ENCODE measurements at regions of chr5 and their contacts with region 1.

Region 1: GRCh38 chr5:14706615-14707021 is 42.1 kb downstream of the OTULIN start:
- DNase-seq: peak; percentile 32 to 84 (median 57)
- ATAC-seq: peak; percentile 95
- H3K4me3 ChIP-seq: peak overlapping the region; percentile 7
- H3K4me3 Mint-ChIP-seq: peak overlapping the region; percentile 84
- H3K27ac ChIP-seq: peak overlapping the region; percentile 85 to 87
- H3K27ac Mint-ChIP-seq: peak overlapping the region; percentile 96
- H3K4me1 ChIP-seq: peaks cover 73% of the 10 kb centered on the region
- H3K4me1 Mint-ChIP-seq: peaks cover 93% of the 10 kb centered on the region
- H3K27me3 ChIP-seq: no peaks in the 10 kb centered on the region
- H3K27me3 Mint-ChIP-seq: no peaks in the 10 kb centered on the region
- CTCF ChIP-seq: no peak

Region 2: GRCh38 chr5:14264604-14265316 is 441.9 kb before region 1 on chr5:
- CTCF ChIA-PET with region 1: no interaction called
- POLR2A ChIA-PET with region 1: no interaction called
- intact Hi-C with region 1: no loop called
- DNase-seq: peak; percentile 21 to 82 (median 60)
- ATAC-seq: peak; percentile 98
- H3K4me3 ChIP-seq: peak overlapping the region; percentile 23
- H3K4me3 Mint-ChIP-seq: peak overlapping the region; percentile 76
- H3K27ac ChIP-seq: no peak overlapping the region
- H3K27ac Mint-ChIP-seq: no peak overlapping the region
- H3K4me1 ChIP-seq: peaks cover 5% of the 10 kb centered on the region
- H3K4me1 Mint-ChIP-seq: peaks cover 6% of the 10 kb centered on the region
- H3K27me3 ChIP-seq: peaks cover 0 to 18% of the 10 kb centered on the region in 2 experiments
- H3K27me3 Mint-ChIP-seq: peaks cover 21% of the 10 kb centered on the region
- CTCF ChIP-seq: no peak

Region 3: DNA sequence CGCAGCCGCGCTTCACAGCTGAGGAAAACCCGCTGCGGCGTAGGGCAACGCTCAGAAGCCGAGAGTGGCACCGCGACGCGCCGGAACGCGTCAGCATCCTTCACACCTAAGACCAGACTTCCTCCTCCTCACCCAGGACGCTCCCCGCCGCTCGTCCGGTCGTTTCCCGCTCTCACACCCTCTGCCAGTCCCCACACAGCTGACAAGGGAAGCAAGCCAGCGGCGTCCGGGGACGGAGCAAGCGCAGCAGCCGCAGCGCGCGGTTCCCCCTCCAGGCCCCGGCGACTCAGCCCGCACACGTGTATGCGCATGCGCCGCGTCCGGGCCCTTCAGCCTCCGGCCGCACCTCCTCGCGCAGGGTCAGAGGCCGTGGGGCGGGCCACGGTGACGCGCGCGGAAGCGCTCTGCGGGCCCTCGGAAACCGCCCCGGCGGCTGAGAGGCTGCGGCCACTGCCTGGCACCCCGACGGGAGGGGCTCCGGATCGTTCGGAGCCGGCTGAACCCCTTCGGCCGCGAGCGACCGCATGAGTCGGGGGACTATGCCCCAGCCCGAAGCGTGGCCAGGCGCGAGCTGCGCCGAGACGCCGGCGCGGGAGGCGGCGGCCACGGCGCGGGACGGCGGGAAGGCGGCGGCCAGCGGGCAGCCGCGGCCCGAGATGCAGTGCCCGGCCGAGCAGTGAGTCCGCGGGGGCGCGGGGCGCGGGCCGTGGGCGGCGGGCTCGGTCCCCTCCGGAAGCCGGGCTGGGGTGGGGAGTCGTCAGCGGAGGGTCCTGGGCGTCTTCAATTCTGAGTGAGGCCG is 42.1 kb before region 1 on chr5 and contains the start of gene OTULIN:
- CTCF ChIA-PET with region 1: no interaction called
- POLR2A ChIA-PET with region 1: interaction called, 4 read pairs
- intact Hi-C with region 1: loop called in 1 of 2 experiments (anchors 5 kb)
- DNase-seq: peak; percentile 62 to 96 (median 80)
- ATAC-seq: peak; percentile 73
- H3K4me3 ChIP-seq: peak within 1 kb of the TSS; percentile 75
- H3K4me3 Mint-ChIP-seq: peak within 1 kb of the TSS; percentile 90
- H3K27ac ChIP-seq: peak within 1 kb of the TSS; percentile 77 to 82
- H3K27ac Mint-ChIP-seq: peak within 1 kb of the TSS; percentile 90
- H3K4me1 ChIP-seq: peaks cover 52% of the 10 kb centered on the region
- H3K4me1 Mint-ChIP-seq: peaks cover 77% of the 10 kb centered on the region
- H3K27me3 ChIP-seq: no peaks in the 10 kb centered on the region
- H3K27me3 Mint-ChIP-seq: no peaks in the 10 kb centered on the region
- CTCF ChIP-seq: no peak
- total RNA-seq, gene OTULIN: 69.4 to 77.0 TPM

Region 4: GRCh38 chr5:14720236-14720971 is 13.8 kb after region 1 on chr5:
- CTCF ChIA-PET with region 1: interaction called, 3 read pairs
- POLR2A ChIA-PET with region 1: interaction called, 28 read pairs
- intact Hi-C with region 1: no loop called
- DNase-seq: peak in 1 of 14 experiments; percentile 26
- ATAC-seq: peak; percentile 62
- H3K4me3 ChIP-seq: no peak overlapping the region
- H3K4me3 Mint-ChIP-seq: no peak overlapping the region
- H3K27ac ChIP-seq: no peak overlapping the region
- H3K27ac Mint-ChIP-seq: peak overlapping the region; percentile 73
- H3K4me1 ChIP-seq: peaks cover 16% of the 10 kb centered on the region
- H3K4me1 Mint-ChIP-seq: peaks cover 40% of the 10 kb centered on the region
- H3K27me3 ChIP-seq: no peaks in the 10 kb centered on the region
- H3K27me3 Mint-ChIP-seq: no peaks in the 10 kb centered on the region
- CTCF ChIP-seq: no peak

Region 5: GRCh38 chr5:14996997-14997396 is 290.4 kb after region 1 on chr5:
- CTCF ChIA-PET with region 1: no interaction called
- POLR2A ChIA-PET with region 1: interaction called, 6 read pairs
- intact Hi-C with region 1: loop called in 1 of 2 experiments (anchors 2 kb)
- DNase-seq: peak in 3 of 14 experiments; percentile 24 to 53 (median 44)
- ATAC-seq: no peak
- H3K4me3 ChIP-seq: no peak overlapping the region
- H3K4me3 Mint-ChIP-seq: no peak overlapping the region
- H3K27ac ChIP-seq: no peak overlapping the region
- H3K27ac Mint-ChIP-seq: no peak overlapping the region
- H3K4me1 ChIP-seq: peaks cover 10% of the 10 kb centered on the region
- H3K4me1 Mint-ChIP-seq: peaks cover 13% of the 10 kb centered on the region
- H3K27me3 ChIP-seq: peaks cover 0 to 7% of the 10 kb centered on the region in 2 experiments
- H3K27me3 Mint-ChIP-seq: no peaks in the 10 kb centered on the region
- CTCF ChIP-seq: no peak